ENCODE measurements at regions of chr14 and their contacts with region 1.

Region 1: GRCh38 chr14:72439707-72440106 is 454.2 kb downstream of the DPF3 start:
- DNase-seq: no peak
- H3K4me3 Mint-ChIP-seq: no peak overlapping the region
- H3K27ac Mint-ChIP-seq: no peak overlapping the region
- H3K4me1 Mint-ChIP-seq: no peaks in the 10 kb centered on the region
- H3K27me3 Mint-ChIP-seq: peaks cover 35% of the 10 kb centered on the region
- CTCF ChIP-seq: no peak

Region 2: GRCh38 chr14:72089625-72090024 is 350.1 kb before region 1 on chr14:
- CTCF ChIA-PET with region 1: interaction called, 10 read pairs
- intact Hi-C with region 1: no loop called
- DNase-seq: no peak
- H3K4me3 Mint-ChIP-seq: no peak overlapping the region
- H3K27ac Mint-ChIP-seq: no peak overlapping the region
- H3K4me1 Mint-ChIP-seq: no peaks in the 10 kb centered on the region
- H3K27me3 Mint-ChIP-seq: peaks cover 46% of the 10 kb centered on the region
- CTCF ChIP-seq: no peak